PC-3 (cell line): ENCODE measurements at regions of chr5 and their contacts with region 1.

Region 1: DNA sequence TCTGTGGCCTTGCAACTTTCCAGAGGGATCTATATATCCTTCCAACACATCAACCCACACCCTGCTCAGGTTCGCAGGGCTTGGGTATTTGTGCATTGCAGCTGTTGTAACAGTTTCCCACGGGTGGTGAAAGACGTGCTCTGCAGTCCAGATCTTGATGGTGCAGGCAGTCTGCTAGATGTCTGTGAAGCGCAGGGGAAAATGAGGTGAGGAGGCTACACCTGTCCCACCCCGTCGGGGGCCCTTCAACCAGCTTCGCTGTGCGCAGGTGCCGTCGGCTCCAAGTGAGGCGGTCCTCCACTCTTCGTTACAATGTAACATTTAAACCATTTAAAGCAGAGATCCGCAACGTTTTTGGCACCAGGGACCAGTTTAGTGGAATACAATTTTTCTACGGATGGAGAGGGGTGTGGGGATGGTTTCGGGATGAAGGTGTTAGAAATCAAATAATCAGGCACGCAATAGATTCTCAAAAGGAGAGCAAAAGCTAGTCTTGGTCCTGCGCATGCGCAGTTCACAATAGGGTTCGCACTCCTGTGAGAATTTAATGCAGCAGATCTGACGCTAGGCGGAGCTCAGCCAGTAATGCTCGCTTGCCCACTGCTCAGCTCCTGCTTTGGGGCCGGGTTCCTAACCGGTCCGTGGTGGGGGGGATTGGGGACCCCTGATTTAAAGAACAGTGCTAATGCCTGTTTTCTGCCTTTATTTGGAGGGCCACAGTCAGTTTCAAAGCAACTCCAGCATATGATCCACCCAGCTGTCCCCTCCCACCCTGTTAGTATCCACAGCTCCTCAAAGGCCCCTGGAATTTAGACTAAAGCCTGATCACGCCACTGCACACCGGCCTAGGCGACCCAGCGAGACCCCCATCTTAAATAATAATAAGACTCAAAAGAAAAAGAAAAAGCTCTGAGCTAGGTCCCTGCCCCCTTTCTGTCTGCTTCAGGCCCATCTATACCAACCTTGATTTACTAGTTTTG is 97.1 kb upstream of the SELENOP start:
- DNase-seq: peak; percentile 96
- ATAC-seq: peak; percentile 83
- H3K4me3 ChIP-seq: peak overlapping the region; percentile 67
- H3K27ac ChIP-seq: no peak overlapping the region
- H3K4me1 ChIP-seq: peaks cover 5% of the 10 kb centered on the region; the same call in 1 of the 2 replicates
- H3K27me3 ChIP-seq: no peaks in the 10 kb centered on the region
- CTCF ChIP-seq: peak; percentile 77

Region 2: GRCh38 chr5:42944989-42945388 is 36.2 kb after region 1 on chr5:
- CTCF ChIA-PET with region 1: interaction called, 15 read pairs
- POLR2A ChIA-PET with region 1: no interaction called
- intact Hi-C with region 1: loop called (anchors 1 kb)
- DNase-seq: peak; percentile 91
- ATAC-seq: peak; percentile 89
- H3K4me3 ChIP-seq: no peak overlapping the region
- H3K27ac ChIP-seq: peak overlapping the region; percentile 55
- H3K4me1 ChIP-seq: peaks cover 35% of the 10 kb centered on the region
- H3K27me3 ChIP-seq: no peaks in the 10 kb centered on the region
- CTCF ChIP-seq: no peak

Region 3: DNA sequence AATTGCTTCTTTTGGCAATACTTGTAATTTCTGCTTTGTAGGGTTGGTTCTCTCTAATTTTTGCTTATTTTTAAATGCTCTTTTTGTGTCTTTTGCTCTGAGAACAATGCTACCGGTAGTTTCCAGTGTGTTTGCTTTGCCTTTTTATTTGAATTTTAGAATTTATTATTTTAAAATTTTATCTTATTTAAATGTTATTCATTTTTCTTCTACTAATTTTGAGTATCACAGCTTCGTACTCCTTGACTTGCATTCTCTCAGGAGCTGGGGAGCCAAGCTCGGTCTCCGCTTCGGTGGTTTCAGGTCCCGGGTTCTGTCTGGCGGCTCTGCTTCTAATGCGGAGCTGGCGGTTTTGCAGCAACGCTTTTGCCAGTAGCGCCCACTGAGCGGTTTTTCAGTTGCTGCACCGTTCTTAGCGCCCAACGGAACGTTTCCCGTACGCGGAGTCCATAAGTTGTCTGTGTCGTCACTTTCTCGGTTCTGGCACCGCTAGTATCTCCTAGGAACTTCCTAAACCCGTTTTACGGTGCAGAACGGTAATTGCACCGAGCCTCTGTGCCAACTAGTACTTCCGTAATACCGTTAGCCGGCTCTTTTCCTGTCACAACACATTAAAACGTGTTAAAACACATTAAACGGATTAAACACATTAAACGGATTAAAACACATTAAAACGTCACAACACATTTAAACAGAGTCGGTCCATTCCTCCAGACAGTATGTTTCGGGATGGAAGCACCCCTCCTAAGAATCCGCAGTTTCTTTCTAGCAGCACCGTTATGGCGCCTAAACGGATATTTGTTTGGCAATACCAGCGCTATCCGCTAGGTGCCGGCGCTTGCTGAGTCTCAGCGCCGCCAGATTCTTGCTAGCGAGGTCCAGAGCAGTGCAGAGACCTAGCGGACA is 85.7 kb after region 1 on chr5:
- CTCF ChIA-PET with region 1: interaction called, 11 read pairs
- POLR2A ChIA-PET with region 1: no interaction called
- intact Hi-C with region 1: no loop called
- DNase-seq: no peak
- ATAC-seq: no peak
- H3K4me3 ChIP-seq: no peak overlapping the region
- H3K27ac ChIP-seq: no peak overlapping the region
- H3K4me1 ChIP-seq: no peaks in the 10 kb centered on the region
- H3K27me3 ChIP-seq: no peaks in the 10 kb centered on the region
- CTCF ChIP-seq: no peak

Region 4: DNA sequence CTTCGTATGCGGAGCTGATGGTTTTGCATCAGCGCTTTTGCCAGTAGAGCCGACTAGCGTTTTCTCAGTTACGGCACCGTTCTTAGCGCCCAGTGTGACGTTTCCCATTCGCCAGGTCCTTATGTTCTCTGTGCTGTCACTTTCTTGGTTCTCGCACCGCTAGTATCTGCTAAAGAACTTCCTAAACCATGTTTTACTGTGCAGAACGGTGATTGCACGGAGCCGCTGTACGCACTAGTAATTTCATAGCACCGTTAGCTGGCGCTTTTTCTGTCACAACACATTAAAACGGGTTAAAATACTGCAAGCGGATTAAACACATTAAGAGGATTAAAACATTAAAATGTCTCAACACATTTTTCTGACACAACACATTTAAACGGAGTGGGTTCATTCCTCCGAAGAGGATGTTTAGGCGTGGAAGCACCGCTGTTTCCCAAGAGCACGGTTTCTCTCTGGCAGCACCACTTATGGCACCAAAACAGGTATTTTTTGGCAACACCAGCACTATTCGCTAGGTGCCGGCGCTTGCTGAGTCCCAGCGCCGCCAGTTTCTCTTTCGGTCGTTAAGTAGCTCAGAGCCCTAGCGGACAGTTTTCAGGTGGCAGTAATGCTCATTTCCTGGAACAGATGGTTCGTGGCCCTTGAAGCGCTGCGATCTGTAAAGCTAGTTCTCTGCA is 111.0 kb after region 1 on chr5:
- CTCF ChIA-PET with region 1: interaction called, 13 read pairs
- POLR2A ChIA-PET with region 1: no interaction called
- intact Hi-C with region 1: loop called (anchors 1 kb)
- DNase-seq: peak; percentile 97
- ATAC-seq: peak; percentile 66
- H3K4me3 ChIP-seq: peak overlapping the region; percentile 80
- H3K27ac ChIP-seq: peak overlapping the region; percentile 85
- H3K4me1 ChIP-seq: peaks cover 39% of the 10 kb centered on the region
- H3K27me3 ChIP-seq: no peaks in the 10 kb centered on the region
- CTCF ChIP-seq: peak; percentile 67

Region 5: GRCh38 chr5:43066799-43067741 is 158.3 kb after region 1 on chr5:
- CTCF ChIA-PET with region 1: interaction called, 12 read pairs
- POLR2A ChIA-PET with region 1: no interaction called
- intact Hi-C with region 1: loop called (anchors 1 kb)
- DNase-seq: peak; percentile 98
- ATAC-seq: peak; percentile 42
- H3K4me3 ChIP-seq: peak overlapping the region; percentile 87
- H3K27ac ChIP-seq: peak overlapping the region; percentile 93
- H3K4me1 ChIP-seq: peaks cover 43% of the 10 kb centered on the region
- H3K27me3 ChIP-seq: no peaks in the 10 kb centered on the region
- CTCF ChIP-seq: no peak

Region 6: DNA sequence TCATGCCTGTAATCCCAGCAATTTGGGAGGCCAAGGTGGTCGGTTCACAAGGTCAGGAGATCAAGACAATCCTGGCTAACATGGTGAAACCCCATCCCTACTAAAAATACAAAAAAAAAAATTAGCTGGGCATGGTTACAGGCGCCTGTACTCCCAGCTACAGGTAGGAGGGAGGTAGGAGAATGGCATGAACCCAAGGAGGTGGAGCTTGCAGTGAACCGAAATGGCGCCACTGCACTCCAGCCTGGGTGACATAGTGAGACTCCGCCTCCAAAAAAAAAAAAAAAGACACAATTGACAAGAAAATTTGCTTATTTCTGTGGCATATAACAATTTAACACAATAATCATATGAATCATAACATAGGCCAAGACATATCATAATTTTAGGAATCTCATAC is 176.7 kb after region 1 on chr5:
- CTCF ChIA-PET with region 1: no interaction called
- POLR2A ChIA-PET with region 1: no interaction called
- intact Hi-C with region 1: no loop called
- DNase-seq: no peak
- ATAC-seq: no peak
- H3K4me3 ChIP-seq: no peak overlapping the region
- H3K27ac ChIP-seq: no peak overlapping the region
- H3K4me1 ChIP-seq: no peaks in the 10 kb centered on the region
- H3K27me3 ChIP-seq: no peaks in the 10 kb centered on the region
- CTCF ChIP-seq: no peak

Region 7: DNA sequence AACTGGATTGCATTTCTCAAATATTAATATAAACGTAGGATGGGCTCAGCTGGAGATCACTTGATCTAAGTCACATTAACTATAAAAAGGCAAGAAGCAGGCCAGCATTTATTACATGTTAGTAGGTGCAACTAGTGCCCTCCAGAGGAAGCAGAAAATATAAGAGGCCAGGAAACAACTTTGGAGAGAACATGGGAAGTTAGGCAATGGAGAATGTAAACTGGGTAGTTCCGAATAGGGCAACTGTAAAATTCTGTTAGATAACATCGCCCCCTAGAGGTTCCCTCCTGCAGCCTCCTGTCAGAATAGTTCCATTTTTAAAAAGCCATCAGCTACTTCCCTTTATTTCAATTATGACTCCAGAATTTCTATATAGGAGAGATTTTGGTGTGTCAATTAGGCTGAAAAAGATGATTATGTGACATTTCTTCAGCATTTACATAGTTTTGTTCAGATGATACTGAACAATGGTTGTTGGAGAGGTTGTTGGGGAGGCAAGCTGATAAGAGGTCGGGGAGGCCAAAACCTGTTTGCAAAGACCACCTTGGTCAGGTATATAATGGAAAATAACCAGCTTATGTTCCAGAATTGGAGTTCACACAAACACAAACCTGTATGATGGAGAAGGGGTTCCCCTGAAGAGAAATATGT is 481.0 kb after region 1 on chr5:
- CTCF ChIA-PET with region 1: no interaction called
- POLR2A ChIA-PET with region 1: no interaction called
- intact Hi-C with region 1: loop called (anchors 2 kb)
- DNase-seq: peak; percentile 96
- ATAC-seq: peak; percentile 84
- H3K4me3 ChIP-seq: no peak overlapping the region
- H3K27ac ChIP-seq: no peak overlapping the region
- H3K4me1 ChIP-seq: peaks cover 14% of the 10 kb centered on the region
- H3K27me3 ChIP-seq: no peaks in the 10 kb centered on the region
- CTCF ChIP-seq: peak; percentile 98